CD8-positive, alpha-beta T cell (primary cell): ENCODE measurements at regions of chr10 and their contacts with region 1.

Region 1: DNA sequence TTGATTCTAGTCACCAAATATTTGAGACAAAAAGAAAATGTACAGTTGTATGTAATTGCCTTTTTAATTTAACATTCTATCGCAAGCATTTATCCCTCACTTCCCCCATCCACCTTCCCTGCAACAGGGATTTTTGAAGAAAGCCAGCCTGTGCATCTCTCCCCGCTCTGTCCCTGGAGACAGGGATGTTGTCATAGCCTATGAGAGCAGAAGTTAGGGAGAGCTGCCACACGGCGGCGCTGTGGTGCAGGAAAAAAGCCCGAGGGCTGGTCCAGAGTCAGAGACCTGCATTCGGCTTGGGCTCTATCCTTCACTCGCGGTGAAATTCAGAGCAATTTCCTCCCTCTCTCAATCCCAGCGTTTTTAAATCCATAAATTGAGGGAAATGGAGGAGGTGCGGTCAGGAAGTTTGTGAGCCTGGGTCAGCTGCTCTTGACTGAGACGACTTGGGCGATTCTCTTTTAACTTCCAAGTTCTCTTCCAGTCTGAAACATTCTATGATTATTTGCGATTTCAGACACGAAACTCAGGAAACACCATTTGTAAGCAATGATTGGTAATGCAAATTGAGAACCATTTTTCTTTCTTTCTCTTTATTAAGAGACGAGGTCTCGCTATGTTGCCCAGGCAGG is 17.5 kb downstream of the HKDC1 start:
- DNase-seq: peak; percentile 76 to 94 (median 85)
- ATAC-seq: peak; percentile 97
- H3K4me3 ChIP-seq: no peak overlapping the region
- H3K4me3 Mint-ChIP-seq: no peak overlapping the region
- H3K27ac ChIP-seq: no peak overlapping the region
- H3K27ac Mint-ChIP-seq: no peak overlapping the region
- H3K4me1 ChIP-seq: peaks cover 23% of the 10 kb centered on the region
- H3K4me1 Mint-ChIP-seq: peaks cover 19% of the 10 kb centered on the region
- H3K27me3 ChIP-seq: no peaks in the 10 kb centered on the region
- H3K27me3 Mint-ChIP-seq: no peaks in the 10 kb centered on the region
- CTCF ChIP-seq: peak; percentile 94

Region 2: DNA sequence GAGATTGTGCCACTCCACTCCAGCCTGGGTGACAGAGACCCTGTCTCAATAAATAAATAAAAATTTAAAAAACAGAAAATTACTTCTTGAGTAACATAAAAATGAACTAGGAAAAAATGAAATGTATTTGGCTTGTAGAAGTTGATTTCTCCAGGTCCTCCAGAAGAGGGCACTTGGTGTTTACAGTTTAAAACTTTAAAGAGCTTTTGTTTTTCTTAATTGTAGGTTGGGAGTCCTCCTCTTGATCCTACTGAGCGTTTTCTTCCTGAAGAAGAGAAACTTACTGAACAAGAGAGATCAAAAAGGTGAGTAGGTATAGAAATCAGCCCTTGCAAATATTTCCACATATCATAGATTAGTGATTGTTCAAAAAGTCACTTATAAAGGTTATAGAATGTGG is 232.8 kb before region 1 on chr10:
- CTCF ChIA-PET with region 1: no interaction called
- POLR2A ChIA-PET with region 1: no interaction called
- intact Hi-C with region 1: loop called in 1 of 2 experiments (anchors 5 kb)
- DNase-seq: peak in 2 of 9 experiments; percentile 61 to 74
- ATAC-seq: peak; percentile 87
- H3K4me3 ChIP-seq: no peak overlapping the region
- H3K4me3 Mint-ChIP-seq: no peak overlapping the region
- H3K27ac ChIP-seq: no peak overlapping the region
- H3K27ac Mint-ChIP-seq: no peak overlapping the region
- H3K4me1 ChIP-seq: no peaks in the 10 kb centered on the region
- H3K4me1 Mint-ChIP-seq: peaks cover 2% of the 10 kb centered on the region
- H3K27me3 ChIP-seq: no peaks in the 10 kb centered on the region
- H3K27me3 Mint-ChIP-seq: no peaks in the 10 kb centered on the region
- CTCF ChIP-seq: peak; percentile 76

Region 3: DNA sequence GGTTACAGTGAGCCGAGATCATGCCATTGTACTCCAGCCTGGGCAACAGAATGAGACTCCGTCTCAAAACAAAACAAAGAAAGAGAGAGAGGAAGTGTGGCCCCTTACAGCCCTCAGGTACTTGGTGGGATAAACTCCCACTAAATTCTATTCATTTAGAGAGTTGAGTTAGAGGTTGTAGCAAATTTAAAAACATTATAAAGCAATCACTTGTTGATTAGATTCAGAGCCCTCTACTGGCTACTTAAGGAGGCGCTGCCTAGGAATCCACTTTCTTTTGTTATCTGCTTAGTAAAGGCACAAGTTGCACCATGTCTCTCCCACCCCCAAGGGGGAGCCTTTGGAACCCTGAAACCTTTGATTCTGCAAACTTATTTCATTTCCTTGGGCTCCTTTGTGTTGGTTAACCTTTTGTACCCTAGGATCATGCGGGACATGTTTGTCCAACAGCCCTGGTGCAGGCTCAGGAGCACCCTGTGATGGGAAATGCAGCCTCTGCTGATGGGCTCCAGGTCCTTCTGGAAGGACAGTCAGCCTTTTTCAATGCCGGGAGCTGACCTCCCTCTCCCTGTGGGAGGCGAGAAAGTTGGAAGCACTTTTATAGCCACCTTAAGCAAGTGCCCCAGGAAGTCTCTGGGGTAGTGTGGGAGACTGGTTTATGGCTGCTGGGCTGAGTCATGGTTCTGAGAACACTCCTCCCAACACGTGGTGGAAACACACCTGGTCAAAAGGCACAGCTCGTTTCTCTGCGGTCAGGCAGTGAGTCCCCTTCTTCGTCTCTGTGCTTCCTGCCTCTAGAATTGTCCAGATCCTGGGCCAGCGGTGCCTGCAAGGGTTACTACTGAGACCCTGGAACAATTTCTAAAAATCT is 15.3 kb before region 1 on chr10:
- CTCF ChIA-PET with region 1: interaction called, 28 read pairs
- POLR2A ChIA-PET with region 1: no interaction called
- intact Hi-C with region 1: no loop called
- DNase-seq: peak in 8 of 9 experiments; percentile 36 to 83 (median 68)
- ATAC-seq: peak; percentile 84
- H3K4me3 ChIP-seq: peak overlapping the region in 1 of 2 experiments; percentile 39
- H3K4me3 Mint-ChIP-seq: peak overlapping the region; percentile 57
- H3K27ac ChIP-seq: peak overlapping the region in 1 of 2 experiments; percentile 60
- H3K27ac Mint-ChIP-seq: peak overlapping the region; percentile 73
- H3K4me1 ChIP-seq: peaks cover 20% of the 10 kb centered on the region
- H3K4me1 Mint-ChIP-seq: peaks cover 32% of the 10 kb centered on the region
- H3K27me3 ChIP-seq: no peaks in the 10 kb centered on the region
- H3K27me3 Mint-ChIP-seq: no peaks in the 10 kb centered on the region
- CTCF ChIP-seq: peak; percentile 87

Region 4: GRCh38 chr10:69318106-69318866 is 80.6 kb after region 1 on chr10:
- CTCF ChIA-PET with region 1: interaction called, 4 read pairs
- POLR2A ChIA-PET with region 1: no interaction called
- intact Hi-C with region 1: loop called (anchors 5 kb)
- DNase-seq: peak; percentile 81 to 96 (median 90)
- ATAC-seq: peak; percentile 89
- H3K4me3 ChIP-seq: peak overlapping the region; percentile 92 to 99
- H3K4me3 Mint-ChIP-seq: peak overlapping the region; percentile 95
- H3K27ac ChIP-seq: peak overlapping the region; percentile 89 to 92
- H3K27ac Mint-ChIP-seq: peak overlapping the region; percentile 89
- H3K4me1 ChIP-seq: peaks cover 32% of the 10 kb centered on the region
- H3K4me1 Mint-ChIP-seq: peaks cover 38% of the 10 kb centered on the region
- H3K27me3 ChIP-seq: no peaks in the 10 kb centered on the region
- H3K27me3 Mint-ChIP-seq: no peaks in the 10 kb centered on the region
- CTCF ChIP-seq: no peak

Region 5: DNA sequence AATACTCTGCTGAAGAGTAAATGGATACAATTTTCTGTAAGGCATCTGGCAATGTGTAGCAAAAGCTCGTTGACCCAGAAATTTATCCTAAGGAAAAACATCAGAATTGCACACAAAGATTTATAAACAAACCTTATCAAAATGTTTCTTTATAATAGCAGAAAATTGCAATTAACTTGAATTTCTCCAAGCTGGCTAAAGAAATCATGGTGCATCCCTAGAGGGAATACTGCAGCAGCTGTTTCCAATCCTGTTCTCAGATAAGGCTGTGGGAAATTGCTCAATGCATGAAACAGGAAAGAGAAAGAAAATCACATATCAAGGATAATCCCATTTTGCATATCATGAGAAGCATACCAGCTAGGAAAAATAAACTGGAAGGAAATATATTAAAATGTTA is 160.3 kb after region 1 on chr10:
- CTCF ChIA-PET with region 1: interaction called, 165 read pairs
- POLR2A ChIA-PET with region 1: no interaction called
- intact Hi-C with region 1: no loop called
- DNase-seq: no peak
- ATAC-seq: no peak
- H3K4me3 ChIP-seq: no peak overlapping the region
- H3K4me3 Mint-ChIP-seq: no peak overlapping the region
- H3K27ac ChIP-seq: no peak overlapping the region
- H3K27ac Mint-ChIP-seq: no peak overlapping the region
- H3K4me1 ChIP-seq: no peaks in the 10 kb centered on the region
- H3K4me1 Mint-ChIP-seq: no peaks in the 10 kb centered on the region
- H3K27me3 ChIP-seq: no peaks in the 10 kb centered on the region
- H3K27me3 Mint-ChIP-seq: no peaks in the 10 kb centered on the region
- CTCF ChIP-seq: no peak

Region 6: DNA sequence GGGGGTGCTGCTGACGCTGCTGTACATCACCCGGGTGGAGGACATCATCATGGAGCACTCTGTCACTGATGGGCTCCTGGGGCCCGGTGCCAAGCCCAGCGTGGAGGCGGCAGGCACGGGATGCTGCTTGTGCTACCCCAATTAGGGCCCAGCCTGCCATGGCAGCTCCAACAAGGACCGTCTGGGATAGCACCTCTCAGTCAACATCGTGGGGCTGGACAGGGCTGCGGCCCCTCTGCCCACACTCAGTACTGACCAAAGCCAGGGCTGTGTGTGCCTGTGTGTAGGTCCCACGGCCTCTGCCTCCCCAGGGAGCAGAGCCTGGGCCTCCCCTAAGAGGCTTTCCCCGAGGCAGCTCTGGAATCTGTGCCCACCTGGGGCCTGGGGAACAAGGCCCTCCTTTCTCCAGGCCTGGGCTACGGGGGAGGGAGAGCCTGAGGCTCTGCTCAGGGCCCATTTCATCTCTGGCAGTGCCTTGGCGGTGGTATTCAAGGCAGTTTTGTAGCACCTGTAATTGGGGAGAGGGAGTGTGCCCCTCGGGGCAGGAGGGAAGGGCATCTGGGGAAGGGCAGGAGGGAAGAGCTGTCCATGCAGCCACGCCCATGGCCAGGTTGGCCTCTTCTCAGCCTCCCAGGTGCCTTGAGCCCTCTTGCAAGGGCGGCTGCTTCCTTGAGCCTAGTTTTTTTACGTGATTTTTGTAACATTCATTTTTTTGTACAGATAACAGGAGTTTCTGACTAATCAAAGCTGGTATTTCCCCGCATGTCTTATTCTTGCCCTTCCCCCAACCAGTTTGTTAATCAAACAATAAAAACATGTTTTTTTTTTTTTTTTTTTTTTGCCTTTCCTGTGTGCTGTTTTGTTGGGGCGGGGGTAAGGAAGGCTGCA is 269.4 kb after region 1 on chr10:
- CTCF ChIA-PET with region 1: interaction called, 11 read pairs
- POLR2A ChIA-PET with region 1: no interaction called
- intact Hi-C with region 1: loop called (anchors 1 kb)
- DNase-seq: peak in 1 of 9 experiments; percentile 48
- ATAC-seq: peak; percentile 6
- H3K4me3 ChIP-seq: peak overlapping the region in 1 of 2 experiments; percentile 10
- H3K4me3 Mint-ChIP-seq: peak overlapping the region; percentile 71
- H3K27ac ChIP-seq: no peak overlapping the region
- H3K27ac Mint-ChIP-seq: peak overlapping the region; percentile 62
- H3K4me1 ChIP-seq: peaks cover 4% of the 10 kb centered on the region
- H3K4me1 Mint-ChIP-seq: peaks cover 10% of the 10 kb centered on the region
- H3K27me3 ChIP-seq: no peaks in the 10 kb centered on the region
- H3K27me3 Mint-ChIP-seq: no peaks in the 10 kb centered on the region
- CTCF ChIP-seq: no peak

Region 7: GRCh38 chr10:69639291-69640195 is 401.9 kb after region 1 on chr10:
- CTCF ChIA-PET with region 1: interaction called, 5 read pairs
- POLR2A ChIA-PET with region 1: no interaction called
- intact Hi-C with region 1: loop called (anchors 5 kb)
- DNase-seq: peak; percentile 43 to 83 (median 71)
- ATAC-seq: peak; percentile 76
- H3K4me3 ChIP-seq: no peak overlapping the region
- H3K4me3 Mint-ChIP-seq: no peak overlapping the region
- H3K27ac ChIP-seq: no peak overlapping the region
- H3K27ac Mint-ChIP-seq: no peak overlapping the region
- H3K4me1 ChIP-seq: no peaks in the 10 kb centered on the region
- H3K4me1 Mint-ChIP-seq: no peaks in the 10 kb centered on the region
- H3K27me3 ChIP-seq: peaks cover 0 to 2% of the 10 kb centered on the region in 2 experiments
- H3K27me3 Mint-ChIP-seq: peaks cover 7% of the 10 kb centered on the region
- CTCF ChIP-seq: peak; percentile 86